HCT116 (cell line): ENCODE measurements at regions of chr19 and their contacts with region 1.

Region 1: GRCh38 chr19:47256688-47257443 is 541 bp downstream of the CCDC9 start:
- DNase-seq: peak; percentile 95
- ATAC-seq: peak; percentile 83
- H3K4me3 ChIP-seq: peak overlapping the region; percentile 77 to 90
- H3K27ac ChIP-seq: peak overlapping the region; percentile 92
- H3K4me1 ChIP-seq: peaks cover 27 to 37% of the 10 kb centered on the region in 2 experiments
- H3K27me3 ChIP-seq: no peaks in the 10 kb centered on the region
- CTCF ChIP-seq: no peak
- POLR2A ChIP-seq: no peak
- RAD21 ChIP-seq: no peak

Region 2: GRCh38 chr19:47035127-47036096 is 221.5 kb before region 1 on chr19:
- CTCF ChIA-PET with region 1: no interaction called
- POLR2A ChIA-PET with region 1: no interaction called
- RAD21 ChIA-PET with region 1: no interaction called
- intact Hi-C with region 1: loop called (anchors 5 kb)
- DNase-seq: peak; percentile 67
- ATAC-seq: peak; percentile 90
- H3K4me3 ChIP-seq: peak overlapping the region; percentile 50 to 69
- H3K27ac ChIP-seq: peak overlapping the region; percentile 81
- H3K4me1 ChIP-seq: peaks cover 23 to 35% of the 10 kb centered on the region in 2 experiments
- H3K27me3 ChIP-seq: no peaks in the 10 kb centered on the region
- CTCF ChIP-seq: peak; percentile 70 to 84 (median 83)
- POLR2A ChIP-seq: peak; percentile 45
- RAD21 ChIP-seq: peak; percentile 72

Region 3: GRCh38 chr19:47210689-47211316 is 46.1 kb before region 1 on chr19:
- CTCF ChIA-PET with region 1: interaction called, 10 read pairs
- POLR2A ChIA-PET with region 1: interaction called, 4 read pairs
- RAD21 ChIA-PET with region 1: interaction called in 1 of 2 experiments, 3 read pairs
- intact Hi-C with region 1: no loop called
- DNase-seq: no peak
- ATAC-seq: peak; percentile 61
- H3K4me3 ChIP-seq: no peak overlapping the region
- H3K27ac ChIP-seq: peak overlapping the region; percentile 12
- H3K4me1 ChIP-seq: peaks cover 5 to 12% of the 10 kb centered on the region in 2 experiments; a peak in 3 of 4 replicates
- H3K27me3 ChIP-seq: no peaks in the 10 kb centered on the region
- CTCF ChIP-seq: peak; percentile 78 to 81 (median 79)
- POLR2A ChIP-seq: no peak
- RAD21 ChIP-seq: peak; percentile 80

Region 4: GRCh38 chr19:47225746-47226425 is 31.0 kb before region 1 on chr19:
- CTCF ChIA-PET with region 1: interaction called, 3 read pairs
- POLR2A ChIA-PET with region 1: interaction called, 25 read pairs
- RAD21 ChIA-PET with region 1: no interaction called
- intact Hi-C with region 1: no loop called
- DNase-seq: no peak
- ATAC-seq: peak; percentile 58
- H3K4me3 ChIP-seq: peak overlapping the region; percentile 76 to 78
- H3K27ac ChIP-seq: peak overlapping the region; percentile 97
- H3K4me1 ChIP-seq: peaks cover 17 to 52% of the 10 kb centered on the region in 2 experiments
- H3K27me3 ChIP-seq: no peaks in the 10 kb centered on the region
- CTCF ChIP-seq: no peak
- POLR2A ChIP-seq: peak; percentile 99
- RAD21 ChIP-seq: no peak

Region 5: GRCh38 chr19:47243776-47244547 is 12.9 kb before region 1 on chr19:
- CTCF ChIA-PET with region 1: interaction called, 21 read pairs
- POLR2A ChIA-PET with region 1: interaction called, 28 read pairs
- RAD21 ChIA-PET with region 1: interaction called in 1 of 2 experiments, 4 read pairs
- intact Hi-C with region 1: no loop called
- DNase-seq: peak; percentile 85
- ATAC-seq: peak; percentile 80
- H3K4me3 ChIP-seq: peak overlapping the region; percentile 52 to 56
- H3K27ac ChIP-seq: peak overlapping the region; percentile 90
- H3K4me1 ChIP-seq: peaks cover 32 to 50% of the 10 kb centered on the region in 2 experiments
- H3K27me3 ChIP-seq: no peaks in the 10 kb centered on the region
- CTCF ChIP-seq: peak; percentile 87 to 97 (median 97)
- POLR2A ChIP-seq: no peak
- RAD21 ChIP-seq: peak; percentile 99

Region 6: GRCh38 chr19:47273313-47273977 is 16.6 kb after region 1 on chr19:
- CTCF ChIA-PET with region 1: interaction called, 4 read pairs
- POLR2A ChIA-PET with region 1: interaction called, 23 read pairs
- RAD21 ChIA-PET with region 1: interaction called, 4 to 5 read pairs
- intact Hi-C with region 1: loop called (anchors 1 kb)
- DNase-seq: peak; percentile 75
- ATAC-seq: peak; percentile 83
- H3K4me3 ChIP-seq: peak overlapping the region; percentile 76 to 89
- H3K27ac ChIP-seq: peak overlapping the region; percentile 83
- H3K4me1 ChIP-seq: peaks cover 10 to 34% of the 10 kb centered on the region in 2 experiments; a peak in 3 of 4 replicates
- H3K27me3 ChIP-seq: no peaks in the 10 kb centered on the region
- CTCF ChIP-seq: no peak
- POLR2A ChIP-seq: no peak
- RAD21 ChIP-seq: no peak

Region 7: GRCh38 chr19:47348819-47349795 is 92.2 kb after region 1 on chr19 and contains the start of gene DHX34:
- CTCF ChIA-PET with region 1: no interaction called
- POLR2A ChIA-PET with region 1: no interaction called
- RAD21 ChIA-PET with region 1: no interaction called
- intact Hi-C with region 1: no loop called
- DNase-seq: peak; percentile 98
- ATAC-seq: peak; percentile 96
- H3K4me3 ChIP-seq: peak within 1 kb of the TSS; percentile 70 to 85
- H3K27ac ChIP-seq: peak within 1 kb of the TSS; percentile 71
- H3K4me1 ChIP-seq: peaks cover 15 to 22% of the 10 kb centered on the region in 2 experiments; a peak in 3 of 4 replicates
- H3K27me3 ChIP-seq: no peaks in the 10 kb centered on the region
- CTCF ChIP-seq: peak; percentile 69 to 98 (median 97)
- POLR2A ChIP-seq: peak; percentile 74
- RAD21 ChIP-seq: no peak
- total RNA-seq, gene DHX34: 30.5 TPM